Activated T-helper 2 cell treated with anti-CD3 and anti-CD28 coated beads, Interferon-gamma antibody, Interleukin-2, Interleukin-4, amounts not matched to agents 10 μg/mL and 5 μg/mL and 100 μg/mL, durations not matched to agents 14 hours and 24 hours and 36 hours (primary cell): ENCODE measurements at regions of chr5 and their contacts with region 1.

Region 1: DNA sequence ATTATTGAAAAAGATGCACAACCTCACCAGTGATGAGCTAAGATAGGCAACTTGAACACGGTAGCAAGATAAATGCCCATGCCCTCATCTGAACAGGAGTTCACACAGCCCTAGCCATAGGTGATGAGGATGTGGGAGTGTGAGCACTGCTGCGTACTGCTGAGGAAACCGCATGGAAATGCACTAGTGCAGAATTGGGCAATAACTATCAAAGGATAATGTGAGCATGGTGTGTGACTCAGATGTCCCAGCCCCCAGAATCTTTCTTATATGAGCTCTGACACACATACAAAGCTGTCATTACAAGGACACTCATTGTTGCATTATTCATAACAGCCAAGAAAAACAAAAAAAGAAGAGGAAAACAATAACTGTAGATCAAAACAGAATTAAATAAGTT is 521.2 kb downstream of the IRX1 start:
- DNase-seq: no peak
- H3K4me3 Mint-ChIP-seq: no peak overlapping the region
- H3K27ac Mint-ChIP-seq: no peak overlapping the region
- H3K4me1 Mint-ChIP-seq: no peaks in the 10 kb centered on the region
- H3K27me3 Mint-ChIP-seq: no peaks in the 10 kb centered on the region

Region 2: GRCh38 chr5:2685651-2686272 is 1431.1 kb before region 1 on chr5:
- intact Hi-C with region 1: no loop called
- DNase-seq: no peak
- H3K4me3 Mint-ChIP-seq: no peak overlapping the region
- H3K27ac Mint-ChIP-seq: no peak overlapping the region
- H3K4me1 Mint-ChIP-seq: no peaks in the 10 kb centered on the region
- H3K27me3 Mint-ChIP-seq: no peaks in the 10 kb centered on the region

Region 3: GRCh38 chr5:4159681-4160080 is 42.8 kb after region 1 on chr5:
- intact Hi-C with region 1: loop called (anchors 2 kb)
- DNase-seq: no peak
- H3K4me3 Mint-ChIP-seq: no peak overlapping the region
- H3K27ac Mint-ChIP-seq: no peak overlapping the region
- H3K4me1 Mint-ChIP-seq: peaks cover 3% of the 10 kb centered on the region
- H3K27me3 Mint-ChIP-seq: no peaks in the 10 kb centered on the region